ENCODE measurements at regions of chr7 and their contacts with region 1.

Region 1: GRCh38 chr7:107150375-107151073 is 18.3 kb upstream of the HBP1 start:
- DNase-seq: peak; percentile 95
- H3K4me3 ChIP-seq: no peak overlapping the region
- H3K27ac ChIP-seq: no peak overlapping the region
- H3K4me1 ChIP-seq: peaks cover 3 to 18% (median 15%) of the 10 kb centered on the region in 4 donors
- H3K27me3 ChIP-seq: no peaks in the 10 kb centered on the region
- CTCF ChIP-seq: peak; percentile 55 to 66 (median 61)
- EP300 ChIP-seq: no peak
- POLR2A ChIP-seq: no peak

Region 2: GRCh38 chr7:106793015-106793975 is 357.2 kb before region 1 on chr7:
- intact Hi-C with region 1: loop called (anchors 5 kb)
- DNase-seq: no peak
- H3K4me3 ChIP-seq: no peak overlapping the region
- H3K27ac ChIP-seq: no peak overlapping the region
- H3K4me1 ChIP-seq: no peaks in the 10 kb centered on the region
- H3K27me3 ChIP-seq: no peaks in the 10 kb centered on the region
- CTCF ChIP-seq: peak; percentile 40 to 52 (median 44)
- EP300 ChIP-seq: no peak
- POLR2A ChIP-seq: no peak

Region 3: DNA sequence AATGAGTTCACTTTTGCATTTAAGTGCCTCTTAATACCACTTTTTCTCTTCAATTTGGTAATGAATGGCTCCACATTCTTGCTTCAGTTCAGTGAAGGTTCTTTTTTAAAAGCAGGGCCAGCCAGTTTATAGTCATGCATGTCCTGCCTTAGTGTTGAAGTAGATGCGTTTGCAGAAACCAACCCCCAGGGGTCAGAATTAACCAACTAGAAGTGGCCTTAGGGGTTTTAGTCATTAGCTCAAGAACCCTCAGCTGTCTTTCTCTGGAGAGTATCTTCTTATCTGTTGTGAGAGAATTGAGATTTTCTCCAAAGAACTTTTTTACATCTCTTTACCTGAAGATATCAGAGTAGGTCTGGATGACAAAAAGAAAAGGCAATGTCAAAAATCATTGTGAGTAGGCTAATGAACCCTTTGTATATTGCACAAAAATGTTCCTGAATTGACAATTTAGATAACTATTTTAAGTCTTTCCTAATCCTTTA is 203.2 kb before region 1 on chr7:
- intact Hi-C with region 1: loop called (anchors 2 kb)
- DNase-seq: no peak
- H3K4me3 ChIP-seq: no peak overlapping the region
- H3K27ac ChIP-seq: no peak overlapping the region
- H3K4me1 ChIP-seq: peaks cover 0 to 29% (median 23%) of the 10 kb centered on the region in 4 donors
- H3K27me3 ChIP-seq: no peaks in the 10 kb centered on the region
- CTCF ChIP-seq: peak; percentile 68 to 78 (median 75)
- EP300 ChIP-seq: no peak
- POLR2A ChIP-seq: no peak

Region 4: DNA sequence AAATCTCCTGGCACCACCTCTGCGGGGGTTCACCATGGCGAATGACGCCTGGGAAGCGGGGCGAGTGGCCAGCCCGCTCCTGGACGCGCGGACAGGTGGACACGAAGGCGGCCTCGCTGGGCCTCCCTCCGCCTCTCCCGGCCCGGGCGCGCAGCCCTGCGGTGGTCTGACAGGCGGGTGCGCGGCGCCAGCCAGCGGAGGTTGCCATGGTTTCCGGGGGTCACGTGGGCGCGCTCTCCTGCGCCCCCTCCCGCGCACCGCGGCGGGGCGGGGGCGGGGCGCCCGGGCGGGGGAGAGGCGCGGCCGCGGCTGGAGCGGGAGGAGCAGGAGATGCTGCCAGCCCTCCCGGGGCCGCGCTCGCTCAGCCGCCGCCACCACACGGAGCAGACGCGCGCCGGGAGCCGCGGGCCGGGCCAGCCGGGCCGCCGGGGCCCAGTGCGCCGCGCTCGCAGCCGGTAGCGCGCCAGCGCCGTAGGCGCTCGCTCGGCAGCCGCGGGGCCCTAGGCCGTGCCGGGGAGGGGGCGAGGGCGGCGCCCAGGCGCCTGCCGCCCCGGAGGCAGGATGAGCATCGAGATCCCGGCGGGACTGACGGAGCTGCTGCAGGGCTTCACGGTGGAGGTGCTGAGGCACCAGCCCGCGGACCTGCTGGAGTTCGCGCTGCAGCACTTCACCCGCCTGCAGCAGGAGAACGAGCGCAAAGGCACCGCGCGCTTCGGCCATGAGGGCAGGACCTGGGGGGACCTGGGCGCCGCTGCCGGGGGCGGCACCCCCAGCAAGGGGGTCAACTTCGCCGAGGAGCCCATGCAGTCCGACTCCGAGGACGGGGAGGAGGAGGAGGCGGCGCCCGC is 106.0 kb before region 1 on chr7 and contains the start of gene PRKAR2B:
- intact Hi-C with region 1: loop called (anchors 10 kb)
- DNase-seq: peak; percentile 94
- H3K4me3 ChIP-seq: peak within 1 kb of the TSS; percentile 69 to 95 (median 92)
- H3K27ac ChIP-seq: peak within 1 kb of the TSS; percentile 91 to 93 (median 91)
- H3K4me1 ChIP-seq: peaks cover 14 to 42% (median 36%) of the 10 kb centered on the region in 4 donors
- H3K27me3 ChIP-seq: no peaks in the 10 kb centered on the region
- CTCF ChIP-seq: peak in 2 of 3 experiments; percentile 15 to 22
- EP300 ChIP-seq: no peak
- POLR2A ChIP-seq: no peak
- total RNA-seq, gene PRKAR2B: 89.5 to 127 (median 102) TPM

Measured in esophagus muscularis mucosa (tissue), 4 donors.